Prostate gland (tissue), 2 donors: ENCODE measurements at regions of chr12 and their contacts with region 1.

Region 1: GRCh38 chr12:71663561-71664294 is at the start of gene ZFC3H1:
- DNase-seq: peak; percentile 97
- H3K4me3 ChIP-seq: peak within 1 kb of the TSS; percentile 83
- H3K27ac ChIP-seq: peak within 1 kb of the TSS; percentile 96 to 97
- H3K4me1 ChIP-seq: no peaks in the 10 kb centered on the region
- H3K27me3 ChIP-seq: no peaks in the 10 kb centered on the region
- CTCF ChIP-seq: peak in 3 of 4 experiments; percentile 17 to 31 (median 22)
- POLR2A ChIP-seq: peak; percentile 96
- total RNA-seq, gene ZFC3H1: 20.8 to 45.2 TPM

Region 2: GRCh38 chr12:71685914-71686665 is 22.4 kb after region 1 on chr12 and contains the start of gene TMEM19:
- intact Hi-C with region 1: loop called (anchors 1 kb)
- DNase-seq: peak; percentile 89
- H3K4me3 ChIP-seq: peak within 1 kb of the TSS; percentile 60 to 65
- H3K27ac ChIP-seq: peak within 1 kb of the TSS; percentile 83 to 89
- H3K4me1 ChIP-seq: no peaks in the 10 kb centered on the region
- H3K27me3 ChIP-seq: no peaks in the 10 kb centered on the region
- CTCF ChIP-seq: peak in 2 of 4 experiments; percentile 38 to 44
- POLR2A ChIP-seq: peak; percentile 53
- total RNA-seq, gene TMEM19: 21.1 to 39.0 TPM

Region 3: GRCh38 chr12:71780237-71780822 is 116.6 kb after region 1 on chr12:
- intact Hi-C with region 1: no loop called
- DNase-seq: peak; percentile 20
- H3K4me3 ChIP-seq: no peak overlapping the region
- H3K27ac ChIP-seq: no peak overlapping the region
- H3K4me1 ChIP-seq: no peaks in the 10 kb centered on the region
- H3K27me3 ChIP-seq: no peaks in the 10 kb centered on the region
- CTCF ChIP-seq: peak in 3 of 4 experiments; percentile 69 to 76 (median 69)
- POLR2A ChIP-seq: no peak

Region 4: DNA sequence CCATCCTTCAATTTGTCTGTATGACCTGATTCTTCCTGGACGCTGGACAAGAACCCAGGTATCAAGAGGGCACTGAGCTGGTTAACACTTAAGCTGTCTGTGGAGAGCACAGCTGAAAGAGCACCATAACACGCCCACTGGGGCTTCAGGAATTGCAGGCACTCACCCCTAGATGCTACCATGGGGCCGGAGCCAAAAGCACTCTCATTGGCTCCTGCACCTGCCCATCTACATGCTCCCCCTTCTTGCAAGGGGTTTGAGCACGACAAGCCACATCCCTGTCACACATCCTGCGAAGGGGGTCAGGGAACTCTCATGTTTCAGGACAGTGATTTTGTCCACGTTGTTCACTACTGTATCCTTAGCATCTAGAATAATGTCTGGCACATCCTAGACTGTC is 140.8 kb after region 1 on chr12:
- intact Hi-C with region 1: no loop called
- DNase-seq: no peak
- H3K4me3 ChIP-seq: no peak overlapping the region
- H3K27ac ChIP-seq: no peak overlapping the region
- H3K4me1 ChIP-seq: no peaks in the 10 kb centered on the region
- H3K27me3 ChIP-seq: no peaks in the 10 kb centered on the region
- CTCF ChIP-seq: no peak
- POLR2A ChIP-seq: no peak

Region 5: GRCh38 chr12:71840231-71840847 is 176.6 kb after region 1 on chr12:
- intact Hi-C with region 1: no loop called
- DNase-seq: no peak
- H3K4me3 ChIP-seq: peak overlapping the region; percentile 48 to 72
- H3K27ac ChIP-seq: peak overlapping the region; percentile 98 to 99
- H3K4me1 ChIP-seq: peaks cover 3% of the 10 kb centered on the region
- H3K27me3 ChIP-seq: no peaks in the 10 kb centered on the region
- CTCF ChIP-seq: no peak
- POLR2A ChIP-seq: no peak